ENCODE measurements at regions of chr17 and their contacts with region 1.

Region 1: DNA sequence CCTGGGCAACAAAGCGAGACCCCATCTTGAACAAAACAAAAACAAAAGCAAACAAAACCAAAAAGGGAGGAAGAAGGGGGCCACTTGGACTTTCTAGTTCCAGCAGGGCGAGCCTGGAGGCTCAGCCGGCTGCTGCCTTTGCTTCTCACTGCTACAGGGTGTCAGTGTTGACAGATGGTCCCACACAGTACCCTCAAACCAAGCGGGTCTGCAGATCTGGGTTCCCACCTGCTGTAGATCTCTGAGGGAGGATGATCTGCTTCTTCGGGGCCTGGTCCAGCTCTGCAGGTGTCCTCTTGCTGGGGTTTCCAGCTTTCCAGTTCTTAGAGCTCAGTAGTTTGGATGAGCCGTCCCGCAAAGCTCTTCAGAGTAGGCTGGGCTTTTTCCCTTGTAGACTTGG is 6.7 kb downstream of the CSHL1 start:
- DNase-seq: no peak
- ATAC-seq: no peak
- H3K4me3 ChIP-seq: no peak overlapping the region
- H3K27ac ChIP-seq: no peak overlapping the region
- H3K4me1 ChIP-seq: no peaks in the 10 kb centered on the region; the same call in 2 of the 3 replicates
- CTCF ChIP-seq: no peak
- EP300 ChIP-seq: no peak
- POLR2A ChIP-seq: no peak
- RAD21 ChIP-seq: no peak

Region 2: GRCh38 chr17:63881876-63882601 is 22.3 kb before region 1 on chr17 and contains the start of gene GH2:
- CTCF ChIA-PET with region 1: interaction called, 80 read pairs
- POLR2A ChIA-PET with region 1: no interaction called
- DNase-seq: peak; percentile 65 to 91
- ATAC-seq: peak; percentile 69 to 93; a peak in 5 of 6 replicates
- H3K4me3 ChIP-seq: no peak within 1 kb of the TSS
- H3K27ac ChIP-seq: no peak within 1 kb of the TSS
- H3K4me1 ChIP-seq: no peaks in the 10 kb centered on the region
- CTCF ChIP-seq: peak; percentile 36; the same call in 2 of the 3 replicates
- EP300 ChIP-seq: no peak
- POLR2A ChIP-seq: no peak
- RAD21 ChIP-seq: 0 out of 5 replicates have a peak, but pooled peaks of 1 of the 2 experiments have one; percentile 20
- polyA plus RNA-seq, gene GH2: not detected in 2 replicates

Region 3: DNA sequence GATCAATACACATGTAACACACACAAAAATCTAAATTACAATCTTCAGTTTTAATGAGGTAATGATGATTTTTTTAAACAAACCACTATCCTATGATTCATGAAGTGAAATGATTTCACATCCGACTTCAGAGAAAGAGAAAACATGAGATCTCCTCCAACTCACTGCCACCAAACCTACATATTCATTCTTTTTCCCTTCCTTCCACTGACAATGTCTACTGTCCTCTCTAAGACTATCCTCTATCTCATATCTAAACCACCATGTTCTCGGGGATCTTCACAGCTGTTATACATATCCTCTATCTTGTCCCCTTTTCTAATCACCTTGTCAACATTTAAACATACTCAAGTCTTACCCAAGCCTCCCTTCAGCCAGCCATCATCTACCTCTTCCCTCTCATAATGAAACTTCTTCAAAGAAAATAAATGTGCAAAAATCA is 704.2 kb after region 1 on chr17:
- CTCF ChIA-PET with region 1: no interaction called
- POLR2A ChIA-PET with region 1: no interaction called
- DNase-seq: no peak
- ATAC-seq: no peak
- H3K4me3 ChIP-seq: no peak overlapping the region
- H3K27ac ChIP-seq: no peak overlapping the region
- H3K4me1 ChIP-seq: peaks cover 8% of the 10 kb centered on the region; the same call in 2 of the 3 replicates
- CTCF ChIP-seq: no peak
- EP300 ChIP-seq: no peak
- POLR2A ChIP-seq: no peak
- RAD21 ChIP-seq: no peak